ENCODE measurements at regions of chr5 and their contacts with region 1.

Region 1: DNA sequence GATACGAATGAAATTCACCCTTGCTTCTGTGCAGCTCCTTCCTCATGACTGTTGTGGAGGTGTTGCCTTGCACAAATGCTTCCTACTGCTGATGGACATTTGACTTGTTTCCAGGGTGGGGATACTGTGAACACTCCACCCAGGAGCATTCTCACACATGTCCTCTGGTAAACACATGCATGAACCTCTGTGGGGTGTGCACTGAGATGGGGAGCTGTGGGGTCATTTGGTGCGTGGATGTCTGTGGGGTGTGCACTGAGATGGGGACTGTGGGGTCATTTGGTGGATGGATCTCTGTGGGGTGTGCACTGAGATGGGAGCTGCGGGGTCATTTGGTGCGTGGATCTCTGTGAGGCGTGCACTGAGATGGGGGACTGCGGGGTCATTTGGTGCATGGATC is 72.9 kb upstream of the IRX4 start:
- DNase-seq: no peak
- H3K4me3 ChIP-seq: no peak overlapping the region
- H3K27ac ChIP-seq: no peak overlapping the region
- H3K4me1 ChIP-seq: no peaks in the 10 kb centered on the region
- H3K27me3 ChIP-seq: no peaks in the 10 kb centered on the region
- CTCF ChIP-seq: no peak
- EP300 ChIP-seq: no peak
- POLR2A ChIP-seq: no peak

Region 2: DNA sequence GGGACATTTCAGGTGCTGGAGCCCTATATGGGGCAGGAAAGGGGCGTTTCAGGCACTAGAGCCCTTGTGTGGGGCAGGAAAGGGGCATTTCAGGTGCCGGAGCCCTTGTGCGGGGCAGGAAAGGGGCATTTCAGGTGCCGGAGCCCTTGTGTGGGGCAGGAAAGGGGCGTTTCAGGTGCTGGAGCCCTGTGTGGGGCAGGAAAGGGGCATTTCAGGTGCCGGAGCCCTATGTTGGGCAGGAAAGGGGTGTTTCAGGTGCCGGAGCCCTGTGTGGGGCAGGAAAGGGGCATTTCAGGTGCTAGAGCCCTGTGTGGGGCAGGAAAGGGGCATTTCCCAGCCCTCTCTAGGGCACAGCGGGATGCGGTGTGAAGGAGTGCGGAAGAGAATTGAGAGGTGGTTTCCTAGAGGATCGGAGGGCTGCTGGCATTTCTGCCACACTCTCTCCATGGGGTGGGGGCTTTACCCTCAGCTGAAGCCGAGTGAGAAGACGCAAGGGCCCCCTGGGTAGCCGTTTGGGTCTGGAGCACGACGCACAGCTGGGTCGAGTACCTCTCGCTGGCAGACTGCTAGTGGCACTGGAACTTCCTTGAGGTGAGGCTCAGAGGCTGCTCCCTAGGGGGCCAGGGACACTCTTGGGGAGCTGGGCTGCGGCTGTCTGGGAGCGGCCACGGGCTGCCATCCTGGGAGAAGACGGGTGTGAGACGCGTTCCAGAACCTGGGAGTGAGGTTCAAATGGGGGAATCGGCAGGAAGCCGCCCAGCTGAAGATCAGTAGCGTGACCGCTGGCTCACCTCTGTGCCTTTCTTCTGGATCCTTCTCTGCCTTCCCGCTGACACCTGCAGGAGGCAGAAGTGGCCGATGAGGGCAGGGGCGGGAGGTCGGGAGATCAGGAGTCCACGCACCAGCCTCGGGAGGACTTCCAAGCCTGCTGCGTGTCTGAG is 49.8 kb after region 1 on chr5:
- intact Hi-C with region 1: loop called (anchors 2 kb)
- DNase-seq: no peak
- H3K4me3 ChIP-seq: no peak overlapping the region
- H3K27ac ChIP-seq: no peak overlapping the region
- H3K4me1 ChIP-seq: peaks cover 0 to 10% (median 2%) of the 10 kb centered on the region in 4 donors
- H3K27me3 ChIP-seq: peaks cover 0 to 14% (median 0%) of the 10 kb centered on the region in 3 donors
- CTCF ChIP-seq: no peak
- EP300 ChIP-seq: no peak
- POLR2A ChIP-seq: no peak

Measured in sigmoid colon (tissue), 7 donors.